RWPE1 (cell line): ENCODE measurements at regions of chr15 and their contacts with region 1.

Region 1: GRCh38 chr15:60751985-60752952 is 273.3 kb upstream of the ICE2 start:
- DNase-seq: no peak
- H3K27ac ChIP-seq: no peak overlapping the region
- CTCF ChIP-seq: no peak

Region 2: GRCh38 chr15:60620708-60621107 is 131.6 kb before region 1 on chr15:
- CTCF ChIA-PET with region 1: no interaction called
- POLR2A ChIA-PET with region 1: no interaction called
- DNase-seq: peak; percentile 19
- H3K27ac ChIP-seq: peak overlapping the region; percentile 79
- CTCF ChIP-seq: no peak

Region 3: DNA sequence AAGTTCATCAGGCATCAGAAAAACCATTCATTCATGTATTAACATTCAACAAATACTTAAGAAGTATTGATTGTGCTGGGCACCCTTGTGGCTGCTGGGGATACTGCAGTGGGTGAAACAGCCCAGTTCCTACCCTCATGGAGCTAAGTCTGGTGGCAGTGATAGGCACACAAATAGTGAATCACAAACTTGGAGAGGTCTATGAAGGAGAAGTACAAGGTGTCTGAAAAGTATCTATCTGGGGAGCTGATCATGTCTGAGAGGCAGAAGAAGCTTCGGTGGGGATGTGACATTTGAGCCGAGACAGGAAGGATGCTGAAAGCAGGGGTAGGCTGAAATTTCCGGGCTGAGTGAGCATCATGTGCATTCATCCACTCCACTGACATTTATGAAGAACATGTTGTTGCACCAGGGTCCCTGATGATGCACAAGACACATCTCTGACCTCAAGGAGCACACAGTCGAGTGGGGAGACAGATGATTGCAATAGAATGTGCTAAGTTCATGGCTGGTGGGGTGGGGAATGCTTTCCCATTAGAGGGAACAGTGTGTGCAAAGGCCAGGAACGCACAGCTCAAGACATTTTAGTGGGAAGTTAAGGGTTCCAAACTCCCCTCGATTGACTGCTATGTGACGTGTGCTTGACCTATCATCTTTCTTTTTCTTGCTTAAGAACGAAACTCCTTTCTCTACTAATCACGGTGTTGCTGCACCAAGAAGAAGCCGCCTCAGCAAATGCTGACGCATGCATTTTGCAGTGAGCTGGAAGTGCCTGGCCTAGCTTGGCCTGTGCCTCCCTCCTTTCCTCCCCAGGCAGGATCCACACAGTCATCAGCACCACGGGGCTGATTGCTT is 35.8 kb after region 1 on chr15:
- CTCF ChIA-PET with region 1: no interaction called
- POLR2A ChIA-PET with region 1: no interaction called
- DNase-seq: peak; percentile 10
- H3K27ac ChIP-seq: no peak overlapping the region
- CTCF ChIP-seq: peak; percentile 29; the same call in 1 of the 2 replicates

Region 4: DNA sequence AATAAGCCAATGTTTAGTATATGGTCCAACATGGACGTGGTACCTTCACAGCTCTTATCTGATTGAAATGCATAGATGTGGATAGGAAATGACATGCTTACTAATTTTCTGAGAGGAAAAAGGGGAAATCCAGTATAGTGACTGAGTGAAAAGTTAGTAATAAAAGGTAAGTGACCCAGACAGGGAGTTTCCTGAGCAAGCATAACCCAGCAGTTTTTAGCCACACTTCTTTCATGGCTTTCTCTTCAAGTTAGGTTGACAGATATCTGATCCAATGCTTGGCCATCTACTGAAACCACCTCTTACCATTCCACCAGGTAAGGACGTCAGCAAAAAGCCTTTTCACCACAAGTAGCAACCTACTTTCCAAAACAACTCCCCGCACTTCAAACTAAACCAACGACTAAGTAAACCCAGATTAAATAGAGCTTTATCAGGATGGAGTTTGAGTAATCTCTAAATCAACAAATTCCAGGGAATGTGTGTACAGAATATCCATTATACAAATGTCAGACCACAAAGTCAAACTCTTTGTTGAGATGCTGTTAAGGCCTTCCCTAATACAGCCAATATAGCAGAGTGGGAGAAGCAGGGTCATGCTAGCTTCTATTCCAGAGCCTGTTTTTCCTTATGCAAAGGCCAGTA is 147.2 kb after region 1 on chr15:
- CTCF ChIA-PET with region 1: no interaction called
- POLR2A ChIA-PET with region 1: interaction called, 10 read pairs
- DNase-seq: no peak
- H3K27ac ChIP-seq: no peak overlapping the region
- CTCF ChIP-seq: no peak